ENCODE measurements at regions of chr10 and their contacts with region 1.

Region 1: DNA sequence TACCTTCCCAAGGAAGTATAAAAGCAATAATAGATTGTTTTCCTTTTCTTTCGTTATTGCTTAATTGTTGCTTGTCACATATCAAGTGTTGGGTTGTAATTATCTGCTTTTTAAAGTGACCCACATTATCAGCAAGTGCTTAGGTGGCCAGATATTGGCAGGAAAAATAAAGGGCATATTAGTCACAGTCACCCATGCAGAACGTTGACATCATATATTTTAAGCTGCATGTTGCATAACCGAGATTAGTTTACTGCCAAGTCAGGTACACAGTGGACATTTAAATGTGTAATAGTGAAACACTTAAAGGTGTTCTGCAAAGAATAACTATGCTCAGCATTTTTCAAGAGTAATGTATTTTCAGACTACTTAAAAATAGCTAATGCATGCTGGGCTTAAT is 11.4 kb downstream of the NEBL start:
- DNase-seq: no peak
- ATAC-seq: peak; percentile 62 to 74
- H3K4me3 ChIP-seq: no peak overlapping the region
- H3K27ac ChIP-seq: no peak overlapping the region
- H3K4me1 ChIP-seq: no peaks in the 10 kb centered on the region
- H3K27me3 ChIP-seq: no peaks in the 10 kb centered on the region

Region 2: DNA sequence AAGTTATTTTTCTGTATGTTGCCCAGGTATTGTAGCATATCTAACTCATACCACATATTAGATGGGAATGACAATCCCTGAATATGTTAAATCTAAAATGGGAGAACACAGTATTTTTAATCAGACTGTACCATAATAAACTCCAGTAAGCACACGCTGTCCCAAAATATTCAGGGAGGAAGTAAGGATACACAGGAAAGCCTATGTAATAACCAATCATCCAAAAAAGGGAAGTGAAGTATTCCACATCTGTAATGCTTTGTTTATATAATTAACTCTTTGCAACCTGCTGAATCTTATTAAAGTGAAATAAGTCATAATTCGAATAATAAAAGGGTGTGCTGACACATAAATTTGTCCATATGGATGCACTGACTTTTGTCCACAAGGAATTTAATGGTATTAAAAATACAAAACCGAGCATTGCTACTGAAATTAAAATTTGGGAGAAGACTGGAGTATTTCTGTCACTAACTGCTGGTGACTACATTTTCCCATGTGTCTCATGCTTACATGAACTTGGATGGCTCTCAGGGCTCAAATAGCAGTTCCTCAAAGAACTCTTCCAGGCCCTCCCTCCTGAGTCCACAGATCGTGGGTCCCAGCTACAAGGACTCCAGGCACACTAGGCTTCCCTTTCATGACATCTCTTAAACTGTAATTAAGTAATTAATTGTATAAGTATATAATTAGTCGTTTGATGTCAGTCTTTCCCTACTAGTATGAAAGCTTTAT is 109.1 kb before region 1 on chr10:
- intact Hi-C with region 1: no loop called
- DNase-seq: no peak
- ATAC-seq: peak in 1 of 2 donors; percentile 6
- H3K4me3 ChIP-seq: no peak overlapping the region
- H3K27ac ChIP-seq: no peak overlapping the region
- H3K4me1 ChIP-seq: no peaks in the 10 kb centered on the region
- H3K27me3 ChIP-seq: no peaks in the 10 kb centered on the region

Region 3: DNA sequence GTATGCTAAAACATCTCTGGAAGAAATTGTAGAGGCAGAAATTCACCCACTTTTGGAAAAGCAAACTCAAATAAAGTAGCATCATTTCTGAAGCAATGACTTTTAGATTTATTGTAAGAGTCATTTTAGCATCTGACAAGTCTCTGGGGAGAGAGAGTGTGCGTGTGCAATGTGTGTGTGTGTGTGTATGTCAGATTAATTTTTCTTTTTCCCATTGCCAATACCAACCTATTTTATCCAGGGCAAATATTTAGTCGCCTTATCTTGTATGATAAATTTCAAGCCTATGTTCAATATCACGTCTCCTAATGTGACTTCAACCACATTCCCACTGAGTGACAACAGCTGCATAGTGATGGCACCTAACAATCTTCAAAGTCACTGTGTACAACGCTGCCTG is 90.3 kb before region 1 on chr10:
- intact Hi-C with region 1: no loop called
- DNase-seq: no peak
- ATAC-seq: no peak
- H3K4me3 ChIP-seq: no peak overlapping the region
- H3K27ac ChIP-seq: no peak overlapping the region
- H3K4me1 ChIP-seq: no peaks in the 10 kb centered on the region
- H3K27me3 ChIP-seq: no peaks in the 10 kb centered on the region

Region 4: DNA sequence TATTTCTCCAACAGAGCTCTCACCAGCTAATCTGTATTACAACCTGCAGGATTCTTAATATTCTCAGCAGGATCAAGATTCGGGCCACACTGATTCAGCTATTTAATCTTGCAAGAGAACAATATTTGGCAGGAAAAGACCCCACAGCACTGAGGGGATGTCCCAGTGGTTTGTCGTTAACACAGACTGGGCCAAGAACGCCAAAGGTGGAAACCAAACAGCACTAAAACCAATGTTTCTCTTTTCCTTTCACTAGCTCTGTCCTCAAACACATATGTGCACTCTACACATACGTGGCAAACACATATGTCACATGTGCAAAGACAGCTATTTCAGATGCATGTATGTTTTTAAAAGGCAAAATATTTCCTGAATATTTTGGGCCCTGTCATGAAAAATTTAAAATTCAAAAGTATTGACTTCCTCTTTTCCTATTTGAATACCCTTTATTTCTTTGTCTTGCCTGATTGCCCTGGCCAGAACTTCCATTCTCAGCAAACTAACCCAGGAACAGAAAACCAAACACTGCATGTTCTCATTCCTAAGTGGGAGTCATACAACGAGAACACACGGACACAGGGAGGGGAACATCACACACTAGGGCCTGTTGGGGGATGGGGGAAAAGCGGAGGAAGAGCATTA is 63.1 kb after region 1 on chr10:
- intact Hi-C with region 1: no loop called
- DNase-seq: no peak
- ATAC-seq: no peak
- H3K4me3 ChIP-seq: no peak overlapping the region
- H3K27ac ChIP-seq: no peak overlapping the region
- H3K4me1 ChIP-seq: no peaks in the 10 kb centered on the region
- H3K27me3 ChIP-seq: no peaks in the 10 kb centered on the region

Region 5: GRCh38 chr10:21015851-21016250 is 130.2 kb after region 1 on chr10:
- intact Hi-C with region 1: loop called in 1 of 4 experiments (anchors 10 kb)
- DNase-seq: no peak
- ATAC-seq: no peak
- H3K4me3 ChIP-seq: no peak overlapping the region
- H3K27ac ChIP-seq: no peak overlapping the region
- H3K4me1 ChIP-seq: no peaks in the 10 kb centered on the region
- H3K27me3 ChIP-seq: no peaks in the 10 kb centered on the region

Region 6: DNA sequence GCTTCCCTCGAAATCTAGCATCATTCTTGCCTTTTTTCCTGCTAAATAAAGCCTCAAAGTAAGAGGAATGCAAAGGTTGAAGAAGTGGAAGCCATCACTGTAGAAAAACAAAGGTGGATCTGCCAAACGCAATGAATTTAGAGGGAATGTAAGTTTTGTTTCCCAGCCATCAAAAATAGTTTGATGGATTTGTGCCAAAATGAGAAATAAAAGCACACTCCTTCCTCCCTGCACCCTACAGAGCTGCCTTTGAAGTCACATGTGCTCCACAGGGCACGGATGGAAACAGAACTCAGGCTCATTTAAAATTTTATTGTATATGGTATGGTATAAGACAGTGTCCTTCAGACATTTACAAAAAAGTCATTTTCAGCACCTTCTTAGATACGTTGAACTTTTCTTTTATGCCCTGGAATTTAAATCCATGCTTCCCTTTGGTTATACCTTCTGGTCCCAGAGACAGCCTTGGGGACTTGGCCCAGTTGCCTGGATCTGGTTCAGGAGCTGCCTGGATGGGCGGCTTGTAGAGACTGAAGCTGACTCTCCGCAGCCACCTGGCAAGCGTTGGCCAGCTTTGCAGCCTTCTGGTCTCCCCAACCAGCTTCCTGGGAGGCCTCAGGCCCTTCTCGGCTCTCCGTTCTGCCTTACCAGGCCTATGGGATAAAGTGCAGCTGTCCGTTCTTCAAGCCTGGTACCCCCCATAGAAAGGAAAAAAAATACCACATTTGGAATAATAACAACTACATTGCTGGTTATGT is 240.0 kb after region 1 on chr10:
- intact Hi-C with region 1: no loop called
- DNase-seq: no peak
- ATAC-seq: no peak
- H3K4me3 ChIP-seq: no peak overlapping the region
- H3K27ac ChIP-seq: no peak overlapping the region
- H3K4me1 ChIP-seq: no peaks in the 10 kb centered on the region
- H3K27me3 ChIP-seq: no peaks in the 10 kb centered on the region